Cardiac septum (tissue), 1 donor: ENCODE measurements at regions of chr12 and their contacts with region 1.

Region 1: DNA sequence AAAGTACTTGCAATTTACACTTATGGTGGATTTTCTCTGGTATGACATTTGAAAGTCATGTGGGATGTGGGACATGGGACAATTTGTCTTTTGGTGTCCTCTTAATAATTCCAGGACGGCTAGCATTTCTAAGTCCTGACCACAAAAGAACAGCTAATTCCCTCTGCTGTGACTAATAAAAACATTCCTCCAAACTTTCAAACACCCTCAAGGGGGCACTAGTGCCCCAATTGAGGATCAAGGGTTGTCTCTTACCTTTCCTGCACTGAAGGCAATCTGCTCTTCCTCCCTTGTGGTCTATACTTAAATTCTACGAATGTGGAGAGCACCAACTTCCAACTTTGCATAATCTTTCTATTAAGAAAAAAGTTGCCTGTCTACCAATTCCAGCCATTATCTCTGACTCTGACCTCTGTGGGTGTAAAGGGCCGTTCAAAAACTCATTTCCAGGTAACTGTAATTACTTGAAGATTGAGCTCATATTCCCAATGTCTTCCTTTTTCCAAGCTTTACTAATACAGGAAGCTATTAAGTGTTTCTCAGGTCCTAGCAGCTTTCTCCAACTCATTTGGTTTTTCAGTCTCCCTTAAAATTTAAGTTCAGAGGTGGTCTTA is 210.2 kb downstream of the PTPRO start:
- DNase-seq: no peak

Region 2: DNA sequence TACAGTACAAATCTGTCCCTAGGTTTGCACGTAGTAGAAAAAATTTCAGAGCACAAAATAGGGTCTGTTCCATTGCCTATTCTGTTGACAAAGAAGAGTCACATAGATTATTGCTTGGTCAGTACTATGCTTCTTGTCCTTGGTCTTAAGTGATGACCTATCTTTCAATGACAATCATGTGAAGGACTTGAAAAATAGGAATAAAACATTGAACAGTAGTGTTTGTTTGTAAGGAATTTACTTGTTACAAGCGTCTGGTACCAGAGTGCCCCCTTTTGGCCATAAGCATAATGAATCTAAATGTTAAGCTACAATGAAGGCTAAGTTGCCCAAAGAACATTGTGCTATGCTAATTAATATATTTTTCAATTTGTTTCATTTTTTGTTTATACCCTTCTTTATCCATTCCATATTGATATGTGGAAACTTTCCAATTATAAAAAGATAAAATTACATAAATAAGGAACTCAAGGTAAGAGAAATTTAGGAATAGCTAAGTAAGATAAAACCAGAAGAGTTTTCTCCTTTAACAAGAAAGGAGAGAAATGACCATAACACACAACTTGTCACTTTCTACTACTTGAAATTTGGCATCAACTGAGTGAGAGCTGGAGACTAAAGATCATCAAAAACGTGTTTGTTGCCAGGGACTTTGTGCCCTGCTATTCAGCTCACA is 52.0 kb after region 1 on chr12:
- intact Hi-C with region 1: loop called (anchors 5 kb)
- DNase-seq: no peak

Region 3: DNA sequence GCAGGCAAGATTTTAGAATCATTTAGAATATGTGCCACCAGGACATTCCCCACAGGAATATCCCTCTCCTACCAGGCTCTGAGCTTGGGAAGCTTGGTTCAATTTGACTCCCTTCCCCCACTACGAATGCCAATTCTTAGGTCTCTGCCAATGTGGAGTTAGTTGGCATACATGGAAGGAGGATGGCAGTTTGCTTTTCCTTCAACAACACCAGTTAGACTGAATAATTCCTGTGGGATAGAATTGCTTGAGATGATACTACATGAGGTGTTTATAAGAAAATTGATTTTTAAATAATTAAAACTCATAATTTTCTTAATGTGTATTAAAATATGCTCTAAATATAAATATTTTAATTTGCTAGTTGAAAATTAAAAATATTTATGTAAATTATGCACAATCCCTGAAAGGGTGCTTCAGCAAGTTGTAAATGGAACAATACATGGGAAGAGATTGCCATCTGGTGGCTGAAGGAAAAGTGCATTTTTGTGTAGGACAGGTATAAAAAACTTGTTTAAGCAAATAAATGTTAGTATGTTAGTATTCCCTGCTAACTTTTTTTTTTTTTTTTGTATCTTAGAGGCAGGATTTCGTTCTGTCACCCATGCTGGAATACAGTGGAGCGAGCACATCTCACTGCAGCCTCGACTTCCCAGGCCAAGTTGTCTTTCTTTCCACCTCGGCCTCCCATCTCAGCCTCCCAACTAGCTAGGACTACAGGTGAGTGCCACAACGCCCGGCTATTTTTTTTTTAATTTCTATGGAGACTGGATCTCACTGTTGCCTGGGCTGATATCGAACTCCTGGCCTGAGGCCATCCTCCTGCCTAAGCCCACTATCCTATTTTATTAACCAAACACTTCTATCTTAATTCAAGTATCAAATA is 323.9 kb after region 1 on chr12:
- intact Hi-C with region 1: loop called (anchors 5 kb)
- DNase-seq: no peak